Caco-2 (cell line): ENCODE measurements at regions of chr2 and their contacts with region 1.

Region 1: DNA sequence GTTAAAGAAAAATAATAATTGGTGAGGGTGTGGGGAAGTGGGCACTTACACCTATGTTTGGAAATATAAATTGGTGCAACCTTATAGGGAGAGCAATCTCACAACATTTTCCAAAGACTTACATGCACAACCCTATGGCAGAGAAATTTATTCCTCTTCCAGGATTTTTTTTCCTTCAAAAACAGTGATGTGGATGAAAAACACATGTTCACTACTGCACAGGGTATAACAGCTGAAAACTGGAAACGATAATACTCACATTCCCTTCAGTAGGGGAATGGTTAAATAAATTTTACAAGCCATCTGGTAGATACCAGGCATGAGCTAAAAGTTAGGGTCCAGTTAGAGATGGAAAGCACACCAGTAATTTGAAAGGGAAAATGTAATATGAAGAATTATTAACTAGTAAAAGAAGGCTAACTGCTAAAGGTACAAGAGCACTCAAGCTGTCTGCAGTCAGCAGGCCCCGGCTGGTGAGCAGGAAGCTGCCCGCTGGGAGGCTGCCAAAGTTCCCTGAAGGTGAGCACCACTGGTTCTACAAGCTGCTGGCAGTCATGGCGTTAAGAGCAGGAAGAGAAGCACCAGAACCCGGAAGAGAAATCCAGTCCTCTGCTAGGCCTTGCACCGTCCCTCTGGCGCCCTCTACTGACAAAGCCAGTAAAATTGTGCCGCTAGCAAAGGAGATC is 28.4 kb upstream of the CASP8 start:
- DNase-seq: peak; percentile 94 to 95
- H3K4me3 ChIP-seq: no peak overlapping the region
- H3K4me3 Mint-ChIP-seq: peak overlapping the region; percentile 98
- H3K27ac Mint-ChIP-seq: peak overlapping the region; percentile 70
- H3K4me1 ChIP-seq: peaks cover 6% of the 10 kb centered on the region
- H3K4me1 Mint-ChIP-seq: peaks cover 11% of the 10 kb centered on the region
- H3K27me3 ChIP-seq: no peaks in the 10 kb centered on the region
- H3K27me3 Mint-ChIP-seq: no peaks in the 10 kb centered on the region
- CTCF ChIP-seq: peak; percentile 91 to 93

Region 2: DNA sequence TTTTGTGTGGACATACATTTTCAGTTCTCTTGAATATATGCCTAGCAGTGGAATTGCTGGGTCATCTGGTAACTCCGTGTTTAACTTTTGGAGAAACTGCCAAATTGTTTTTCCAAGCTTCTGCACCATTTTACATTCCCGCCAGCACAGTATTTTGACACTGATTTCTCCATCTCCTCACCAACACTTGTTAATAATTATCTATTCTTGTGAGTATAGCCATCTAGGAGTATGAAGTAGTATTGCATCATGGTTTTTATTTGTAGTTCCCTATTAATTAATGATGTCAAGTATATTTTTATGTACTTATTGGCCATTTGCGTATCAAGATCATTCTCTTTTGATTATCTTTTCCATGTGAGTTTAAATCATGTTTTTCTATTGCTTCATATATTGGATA is 664.0 kb before region 1 on chr2:
- CTCF ChIA-PET with region 1: no interaction called
- POLR2A ChIA-PET with region 1: no interaction called
- intact Hi-C with region 1: no loop called
- DNase-seq: no peak
- H3K4me3 ChIP-seq: no peak overlapping the region
- H3K4me3 Mint-ChIP-seq: no peak overlapping the region
- H3K27ac Mint-ChIP-seq: no peak overlapping the region
- H3K4me1 ChIP-seq: no peaks in the 10 kb centered on the region
- H3K4me1 Mint-ChIP-seq: no peaks in the 10 kb centered on the region
- H3K27me3 ChIP-seq: no peaks in the 10 kb centered on the region
- H3K27me3 Mint-ChIP-seq: no peaks in the 10 kb centered on the region
- CTCF ChIP-seq: no peak

Region 3: DNA sequence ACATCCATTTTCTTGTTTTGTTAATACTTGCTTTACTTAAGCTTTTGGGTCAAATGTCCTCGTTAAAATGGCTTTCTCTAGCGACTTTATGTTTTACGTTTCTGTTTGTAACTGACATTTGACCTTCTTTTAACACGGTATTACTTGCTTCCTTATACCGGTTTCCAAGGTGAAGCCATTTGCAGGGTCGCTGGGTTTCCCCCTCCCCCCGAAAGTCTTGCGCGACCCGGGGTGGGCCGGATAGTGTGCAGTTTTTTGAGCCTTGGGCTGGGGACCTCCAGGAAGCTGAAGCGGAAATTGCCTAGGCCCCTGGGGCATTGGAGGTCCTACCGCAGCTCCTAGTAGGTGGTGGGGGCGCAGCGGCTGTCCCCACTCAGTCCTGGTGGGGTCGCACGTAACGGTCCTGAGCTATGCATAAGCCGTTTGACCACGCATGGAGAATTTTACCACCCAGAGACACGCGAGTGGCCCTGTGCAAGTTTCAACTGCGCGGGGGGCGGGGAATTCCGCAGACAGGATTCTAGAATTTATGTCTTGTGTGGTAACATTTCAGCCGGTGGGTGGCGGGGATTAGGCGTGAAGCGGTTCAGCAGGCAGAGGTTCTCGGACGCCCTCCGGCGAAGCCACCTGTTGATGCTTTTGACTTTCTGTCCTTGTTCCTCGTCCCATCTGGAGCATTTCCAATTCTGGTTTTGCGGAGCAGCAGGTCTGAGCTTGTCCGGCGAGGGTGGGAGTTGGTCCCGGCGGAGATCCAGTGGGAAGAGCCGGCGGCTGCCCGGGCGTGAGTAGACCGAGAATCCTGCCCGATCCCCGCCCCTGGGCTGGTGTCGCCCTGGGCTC is 113.6 kb before region 1 on chr2:
- CTCF ChIA-PET with region 1: interaction called, 8 read pairs
- POLR2A ChIA-PET with region 1: interaction called, 3 read pairs
- intact Hi-C with region 1: loop called (anchors 1 kb)
- DNase-seq: peak; percentile 89 to 91
- H3K4me3 ChIP-seq: peak overlapping the region; percentile 85
- H3K4me3 Mint-ChIP-seq: peak overlapping the region; percentile 98
- H3K27ac Mint-ChIP-seq: peak overlapping the region; percentile 91
- H3K4me1 ChIP-seq: peaks cover 42% of the 10 kb centered on the region
- H3K4me1 Mint-ChIP-seq: peaks cover 39% of the 10 kb centered on the region
- H3K27me3 ChIP-seq: no peaks in the 10 kb centered on the region
- H3K27me3 Mint-ChIP-seq: no peaks in the 10 kb centered on the region
- CTCF ChIP-seq: peak; percentile 16 to 58

Region 4: GRCh38 chr2:201182650-201183364 is 49.1 kb before region 1 on chr2 and contains the start of gene CASP10:
- CTCF ChIA-PET with region 1: interaction called, 76 read pairs
- POLR2A ChIA-PET with region 1: interaction called, 13 read pairs
- intact Hi-C with region 1: loop called (anchors 1 kb)
- DNase-seq: peak; percentile 49 to 75
- H3K4me3 ChIP-seq: peak within 1 kb of the TSS; percentile 55
- H3K4me3 Mint-ChIP-seq: peak within 1 kb of the TSS; percentile 81
- H3K27ac Mint-ChIP-seq: peak within 1 kb of the TSS; percentile 92
- H3K4me1 ChIP-seq: peaks cover 4% of the 10 kb centered on the region; the same call in 1 of the 2 replicates
- H3K4me1 Mint-ChIP-seq: peaks cover 13% of the 10 kb centered on the region
- H3K27me3 ChIP-seq: no peaks in the 10 kb centered on the region
- H3K27me3 Mint-ChIP-seq: no peaks in the 10 kb centered on the region
- CTCF ChIP-seq: peak in 1 of 2 experiments; percentile 72
- total RNA-seq, gene CASP10: 5.8 and 5.9 TPM in 2 replicates

Region 5: GRCh38 chr2:201357241-201357640 is 125.3 kb after region 1 on chr2 and contains the start of gene FLACC1:
- CTCF ChIA-PET with region 1: interaction called, 5 read pairs
- POLR2A ChIA-PET with region 1: no interaction called
- intact Hi-C with region 1: loop called (anchors 2 kb)
- DNase-seq: peak; percentile 64 to 71
- H3K4me3 ChIP-seq: no peak within 1 kb of the TSS
- H3K4me3 Mint-ChIP-seq: no peak within 1 kb of the TSS
- H3K27ac Mint-ChIP-seq: peak within 1 kb of the TSS; percentile 40
- H3K4me1 ChIP-seq: peaks cover 11% of the 10 kb centered on the region
- H3K4me1 Mint-ChIP-seq: peaks cover 12% of the 10 kb centered on the region
- H3K27me3 ChIP-seq: no peaks in the 10 kb centered on the region
- H3K27me3 Mint-ChIP-seq: no peaks in the 10 kb centered on the region
- CTCF ChIP-seq: no peak
- total RNA-seq, gene FLACC1: 0.86 and 0.91 TPM in 2 replicates

Region 6: GRCh38 chr2:201642579-201643215 is 410.8 kb after region 1 on chr2:
- CTCF ChIA-PET with region 1: no interaction called
- POLR2A ChIA-PET with region 1: no interaction called
- intact Hi-C with region 1: loop called (anchors 10 kb)
- DNase-seq: peak; percentile 85 to 94
- H3K4me3 ChIP-seq: peak overlapping the region; percentile 64
- H3K4me3 Mint-ChIP-seq: peak overlapping the region; percentile 92
- H3K27ac Mint-ChIP-seq: peak overlapping the region; percentile 97
- H3K4me1 ChIP-seq: no peaks in the 10 kb centered on the region
- H3K4me1 Mint-ChIP-seq: peaks cover 18% of the 10 kb centered on the region
- H3K27me3 ChIP-seq: no peaks in the 10 kb centered on the region
- H3K27me3 Mint-ChIP-seq: no peaks in the 10 kb centered on the region
- CTCF ChIP-seq: no peak